ENCODE measurements at regions of chr1 and their contacts with region 1.

Region 1: DNA sequence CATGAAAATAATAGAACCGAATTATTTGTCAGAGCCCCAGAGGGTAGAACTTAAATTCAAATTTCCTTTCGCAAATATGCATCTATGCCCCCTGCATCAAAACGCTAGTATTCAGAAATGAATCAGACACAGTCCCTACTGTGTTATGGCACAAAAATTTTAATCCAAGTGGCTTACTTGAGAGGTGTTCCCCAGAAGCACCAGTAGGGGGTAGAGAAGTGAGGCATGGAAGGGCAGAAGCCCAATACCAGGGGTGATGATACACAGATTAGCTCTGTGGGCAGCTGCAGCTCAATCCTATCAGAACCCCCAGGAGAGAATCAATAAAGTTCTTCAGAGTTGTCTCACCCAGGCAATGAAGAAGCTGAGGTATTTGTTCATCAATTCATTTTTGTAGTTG is 342.2 kb downstream of the OMA1 start:
- DNase-seq: no peak
- H3K4me3 ChIP-seq: no peak overlapping the region
- H3K27ac ChIP-seq: no peak overlapping the region
- H3K4me1 ChIP-seq: no peaks in the 10 kb centered on the region
- H3K27me3 ChIP-seq: no peaks in the 10 kb centered on the region
- CTCF ChIP-seq: peak; percentile 23 to 56 (median 52)
- EP300 ChIP-seq: no peak
- POLR2A ChIP-seq: no peak
- RAD21 ChIP-seq: peak; percentile 50 to 72

Region 2: GRCh38 chr1:57976216-57976615 is 228.1 kb before region 1 on chr1:
- CTCF ChIA-PET with region 1: no interaction called
- POLR2A ChIA-PET with region 1: no interaction called
- DNase-seq: no peak
- H3K4me3 ChIP-seq: no peak overlapping the region
- H3K27ac ChIP-seq: no peak overlapping the region
- H3K4me1 ChIP-seq: no peaks in the 10 kb centered on the region; a peak in 1 of 7 replicates
- H3K27me3 ChIP-seq: no peaks in the 10 kb centered on the region
- CTCF ChIP-seq: no peak
- EP300 ChIP-seq: no peak
- POLR2A ChIP-seq: no peak
- RAD21 ChIP-seq: no peak

Region 3: GRCh38 chr1:58190267-58190988 is 13.9 kb before region 1 on chr1:
- CTCF ChIA-PET with region 1: interaction called, 13 read pairs
- POLR2A ChIA-PET with region 1: no interaction called
- DNase-seq: no peak
- H3K4me3 ChIP-seq: no peak overlapping the region
- H3K27ac ChIP-seq: no peak overlapping the region
- H3K4me1 ChIP-seq: peaks cover 0 to 3% (median 0%) of the 10 kb centered on the region in 4 experiments; a peak in 1 of 7 replicates
- H3K27me3 ChIP-seq: no peaks in the 10 kb centered on the region
- CTCF ChIP-seq: no peak
- EP300 ChIP-seq: no peak
- POLR2A ChIP-seq: no peak
- RAD21 ChIP-seq: no peak

Region 4: DNA sequence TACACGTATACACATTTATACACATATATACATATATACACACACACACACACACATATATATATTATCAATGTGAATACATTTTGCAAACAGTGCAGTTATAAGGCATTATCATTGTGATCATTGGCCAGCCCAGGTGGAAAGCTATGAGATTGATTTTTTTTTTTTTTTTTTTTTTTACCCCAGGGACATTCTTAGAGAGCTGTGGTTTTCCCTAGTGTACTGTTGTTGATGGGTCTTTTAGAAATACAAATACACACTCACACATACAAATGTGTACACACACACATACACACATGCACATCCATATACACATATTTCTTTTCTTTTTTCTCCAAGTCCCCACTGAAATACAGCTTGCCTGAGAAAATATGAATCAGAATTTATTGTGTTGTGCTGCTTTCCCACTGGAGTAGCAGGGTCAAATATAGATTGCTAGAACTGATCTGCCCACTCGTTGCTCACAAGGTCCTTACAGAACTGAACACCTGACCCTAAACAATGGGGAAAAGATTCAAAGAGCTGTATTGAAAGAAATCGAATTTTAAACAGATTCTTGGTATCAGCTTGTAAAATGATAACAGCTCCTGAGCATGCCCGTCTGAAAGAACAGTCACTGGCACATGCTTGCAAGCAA is 16.7 kb after region 1 on chr1:
- CTCF ChIA-PET with region 1: interaction called, 26 read pairs
- POLR2A ChIA-PET with region 1: no interaction called
- DNase-seq: no peak
- H3K4me3 ChIP-seq: no peak overlapping the region
- H3K27ac ChIP-seq: no peak overlapping the region
- H3K4me1 ChIP-seq: no peaks in the 10 kb centered on the region
- H3K27me3 ChIP-seq: no peaks in the 10 kb centered on the region
- CTCF ChIP-seq: no peak
- EP300 ChIP-seq: no peak
- POLR2A ChIP-seq: no peak
- RAD21 ChIP-seq: no peak

Region 5: GRCh38 chr1:58231204-58231603 is 26.9 kb after region 1 on chr1:
- CTCF ChIA-PET with region 1: interaction called, 12 read pairs
- POLR2A ChIA-PET with region 1: no interaction called
- DNase-seq: no peak
- H3K4me3 ChIP-seq: no peak overlapping the region
- H3K27ac ChIP-seq: no peak overlapping the region
- H3K4me1 ChIP-seq: peaks cover 0 to 6% (median 4%) of the 10 kb centered on the region in 4 experiments; a peak in 5 of 7 replicates
- H3K27me3 ChIP-seq: no peaks in the 10 kb centered on the region
- CTCF ChIP-seq: no peak
- EP300 ChIP-seq: no peak
- POLR2A ChIP-seq: no peak
- RAD21 ChIP-seq: no peak

Region 6: DNA sequence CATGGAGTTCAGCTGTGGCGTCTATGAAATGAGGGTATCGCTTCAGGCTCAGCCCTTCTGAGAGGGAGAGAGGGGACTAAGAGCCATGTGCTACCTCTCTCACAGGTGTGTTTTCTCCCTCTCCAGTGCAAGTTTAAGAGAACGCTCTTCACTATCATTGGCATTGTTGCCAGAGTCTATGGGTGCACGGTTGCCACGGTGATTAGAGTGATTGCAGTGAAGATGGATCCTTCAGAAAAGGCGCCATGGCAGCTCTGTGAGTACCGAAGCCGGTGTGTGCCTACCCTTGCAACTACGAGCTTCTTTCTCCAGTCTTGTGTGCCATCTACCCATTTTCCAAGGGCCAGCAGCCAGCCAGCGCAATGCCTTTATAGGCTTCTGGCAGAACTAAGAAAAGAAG is 51.8 kb after region 1 on chr1:
- CTCF ChIA-PET with region 1: interaction called, 11 read pairs
- POLR2A ChIA-PET with region 1: no interaction called
- DNase-seq: no peak
- H3K4me3 ChIP-seq: no peak overlapping the region
- H3K27ac ChIP-seq: no peak overlapping the region
- H3K4me1 ChIP-seq: no peaks in the 10 kb centered on the region
- H3K27me3 ChIP-seq: no peaks in the 10 kb centered on the region
- CTCF ChIP-seq: no peak
- EP300 ChIP-seq: no peak
- POLR2A ChIP-seq: no peak
- RAD21 ChIP-seq: no peak